ENCODE measurements at regions of chr4 and their contacts with region 1.

Region 1: GRCh38 chr4:143882892-143883291 is 22.5 kb downstream of the GYPE start:
- DNase-seq: no peak
- H3K4me3 Mint-ChIP-seq: no peak overlapping the region
- H3K27ac Mint-ChIP-seq: no peak overlapping the region
- H3K4me1 Mint-ChIP-seq: no peaks in the 10 kb centered on the region
- H3K27me3 Mint-ChIP-seq: no peaks in the 10 kb centered on the region

Region 2: GRCh38 chr4:144115519-144115918 is 232.6 kb after region 1 on chr4:
- intact Hi-C with region 1: loop called (anchors 5 kb)
- DNase-seq: no peak
- H3K4me3 Mint-ChIP-seq: no peak overlapping the region
- H3K27ac Mint-ChIP-seq: no peak overlapping the region
- H3K4me1 Mint-ChIP-seq: no peaks in the 10 kb centered on the region
- H3K27me3 Mint-ChIP-seq: peaks cover 2% of the 10 kb centered on the region

Region 3: DNA sequence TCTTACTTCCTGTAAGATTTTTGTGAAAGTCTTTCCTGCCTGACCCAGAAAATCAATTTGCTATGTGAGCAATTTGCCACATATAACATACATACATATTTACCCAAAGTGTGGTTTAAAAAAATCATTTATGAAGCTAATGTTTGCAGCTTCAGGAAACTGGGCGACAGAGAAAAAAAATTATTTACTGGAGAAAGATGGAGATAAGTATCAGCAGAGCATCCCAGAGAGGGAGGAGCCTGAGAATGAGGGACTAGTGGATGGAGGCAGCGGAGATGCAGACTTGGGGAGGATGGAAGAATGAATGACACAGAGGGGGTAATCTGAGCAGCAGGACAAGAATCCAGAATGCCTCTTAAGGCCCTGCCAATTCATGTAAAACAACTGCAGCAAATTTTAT is 258.6 kb after region 1 on chr4:
- intact Hi-C with region 1: no loop called
- DNase-seq: no peak
- H3K4me3 Mint-ChIP-seq: no peak overlapping the region
- H3K27ac Mint-ChIP-seq: no peak overlapping the region
- H3K4me1 Mint-ChIP-seq: no peaks in the 10 kb centered on the region
- H3K27me3 Mint-ChIP-seq: peaks cover 6% of the 10 kb centered on the region

Measured in activated CD4-positive, alpha-beta T cell treated with anti-CD3 and anti-CD28 coated beads, Interleukin-2, amount 10 ng/mL, durations not matched to agents 24 days and 14 days (primary cell).